Vagina (tissue), 2 donors: ENCODE measurements at regions of chr3 and their contacts with region 1.

Region 1: DNA sequence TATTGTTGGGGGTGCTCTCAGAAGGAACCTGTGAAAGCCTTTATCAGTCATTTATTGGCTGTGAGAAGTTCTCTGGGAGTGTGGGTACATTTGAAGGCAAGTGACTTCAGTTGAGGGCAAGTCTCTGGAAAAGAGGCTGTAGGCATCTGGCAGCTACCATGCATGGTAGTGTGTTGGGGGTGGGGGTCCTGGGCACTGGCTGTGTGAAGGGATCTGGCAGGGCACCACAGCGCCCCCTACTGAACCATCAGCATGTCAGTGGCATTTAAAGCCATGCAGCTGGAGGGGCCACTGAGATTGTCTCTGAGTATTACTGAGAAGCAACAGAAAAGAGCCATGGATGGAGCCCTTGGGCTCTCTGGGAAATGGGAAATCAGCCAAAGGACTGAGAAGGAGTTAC is 30.6 kb downstream of the CRTAP start:
- DNase-seq: no peak
- H3K4me3 ChIP-seq: no peak overlapping the region
- H3K27ac ChIP-seq: no peak overlapping the region
- H3K4me1 ChIP-seq: peaks cover 8% of the 10 kb centered on the region
- H3K27me3 ChIP-seq: no peaks in the 10 kb centered on the region
- CTCF ChIP-seq: no peak
- POLR2A ChIP-seq: no peak

Region 2: DNA sequence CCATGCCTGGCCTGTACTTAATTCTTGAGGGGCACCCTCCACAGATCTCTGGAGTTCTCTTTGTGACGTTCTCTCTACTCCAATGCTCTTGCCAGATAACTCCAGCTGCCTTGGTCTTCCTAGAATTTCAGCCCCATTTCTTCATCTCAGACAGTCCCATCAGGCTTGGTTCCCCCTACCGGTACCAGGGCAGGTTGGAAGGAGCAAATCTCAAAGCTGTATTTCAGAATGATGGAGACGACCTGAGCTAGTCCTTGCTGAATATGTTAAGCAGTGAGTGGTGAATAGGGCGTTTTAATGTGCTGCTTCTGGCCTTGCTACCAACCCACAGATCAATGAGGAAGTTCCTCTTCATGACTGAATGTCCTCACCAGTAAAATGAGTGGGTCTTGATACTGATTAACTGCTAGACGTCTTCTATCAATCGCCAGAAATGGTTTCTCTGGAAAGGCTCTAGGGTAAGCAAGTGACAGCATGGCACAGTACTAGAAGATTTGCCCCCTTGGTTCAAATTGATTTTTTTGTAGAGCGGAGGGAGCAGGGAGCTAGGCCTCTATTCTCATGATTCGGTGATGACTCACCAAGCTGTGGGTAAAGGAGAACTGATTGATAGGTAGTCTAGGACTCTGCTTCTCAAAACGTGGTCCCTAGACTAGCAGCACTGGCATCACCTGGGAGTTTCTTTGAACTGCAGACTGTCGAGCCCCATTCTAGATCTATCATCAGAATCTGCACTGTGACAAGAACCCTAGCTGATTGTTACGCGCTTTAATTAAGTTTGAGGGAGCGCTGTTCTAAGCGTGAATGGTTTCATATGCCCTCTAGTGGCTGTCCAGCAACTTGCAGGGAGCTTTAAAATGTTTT is 228.0 kb after region 1 on chr3:
- intact Hi-C with region 1: loop called (anchors 10 kb)
- DNase-seq: no peak
- H3K4me3 ChIP-seq: no peak overlapping the region
- H3K27ac ChIP-seq: no peak overlapping the region
- H3K4me1 ChIP-seq: peaks cover 4% of the 10 kb centered on the region
- H3K27me3 ChIP-seq: no peaks in the 10 kb centered on the region
- CTCF ChIP-seq: peak; percentile 63 to 80 (median 80)
- POLR2A ChIP-seq: no peak